CD8-positive, alpha-beta T cell (primary cell): ENCODE measurements at regions of chr3 and their contacts with region 1.

Region 1: DNA sequence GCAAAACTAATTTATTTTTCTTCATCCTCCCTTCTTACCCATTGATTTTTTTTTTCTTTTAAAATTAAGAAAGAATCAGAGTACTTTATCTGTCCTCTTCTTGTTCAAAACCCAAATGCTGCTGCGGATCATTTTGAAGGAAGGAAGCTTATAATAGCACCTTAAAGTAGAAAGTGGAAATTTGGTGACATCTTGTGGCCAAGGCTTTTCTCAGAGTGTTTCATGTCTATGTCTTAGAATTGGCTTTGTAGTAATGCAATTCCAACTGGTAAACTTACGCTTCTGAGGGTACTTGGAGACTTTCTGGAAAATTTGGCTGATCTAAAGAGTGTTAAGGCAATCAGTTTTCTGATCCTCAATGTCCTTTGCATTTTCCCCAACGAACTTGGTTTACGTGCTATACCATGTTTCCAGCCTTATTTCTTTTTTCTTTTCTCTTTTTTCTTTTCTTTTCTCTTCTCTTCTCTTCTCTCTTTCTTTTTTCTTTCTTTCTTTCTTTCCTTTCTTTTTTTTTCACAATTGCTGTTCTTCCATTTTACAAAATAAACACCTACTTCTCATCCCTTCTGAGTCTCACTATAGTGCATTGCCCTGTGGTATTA is 30.7 kb downstream of the C3orf38 start:
- DNase-seq: peak in 5 of 9 experiments; percentile 13 to 67 (median 27)
- ATAC-seq: peak; percentile 62
- H3K4me3 ChIP-seq: no peak overlapping the region
- H3K4me3 Mint-ChIP-seq: no peak overlapping the region
- H3K27ac ChIP-seq: no peak overlapping the region
- H3K27ac Mint-ChIP-seq: no peak overlapping the region
- H3K4me1 ChIP-seq: no peaks in the 10 kb centered on the region
- H3K4me1 Mint-ChIP-seq: peaks cover 6% of the 10 kb centered on the region
- H3K27me3 ChIP-seq: no peaks in the 10 kb centered on the region
- H3K27me3 Mint-ChIP-seq: peaks cover 2% of the 10 kb centered on the region
- CTCF ChIP-seq: peak; percentile 75

Region 2: DNA sequence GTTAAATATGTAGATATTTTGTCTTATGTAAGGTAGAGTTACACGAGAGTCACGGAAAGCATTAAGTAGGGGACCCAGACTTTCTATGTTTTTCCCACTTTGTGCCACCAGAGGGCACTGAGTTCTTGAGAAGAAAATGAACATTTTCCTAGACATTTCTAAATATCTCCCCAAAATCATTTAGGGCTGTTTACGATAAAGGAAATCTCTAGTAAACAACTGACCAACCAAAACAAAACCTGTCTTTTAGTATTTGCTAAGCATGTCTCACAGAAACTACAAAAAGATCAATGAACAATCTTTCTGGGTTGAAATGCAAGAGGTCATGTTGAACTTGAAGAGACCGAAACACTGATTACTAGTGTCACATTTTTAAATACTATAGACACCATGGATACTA is 920.2 kb before region 1 on chr3:
- CTCF ChIA-PET with region 1: no interaction called
- POLR2A ChIA-PET with region 1: no interaction called
- intact Hi-C with region 1: loop called in 1 of 2 experiments (anchors 1 kb)
- DNase-seq: peak in 6 of 9 experiments; percentile 14 to 59 (median 43)
- ATAC-seq: peak; percentile 66
- H3K4me3 ChIP-seq: no peak overlapping the region
- H3K4me3 Mint-ChIP-seq: no peak overlapping the region
- H3K27ac ChIP-seq: no peak overlapping the region
- H3K27ac Mint-ChIP-seq: no peak overlapping the region
- H3K4me1 ChIP-seq: no peaks in the 10 kb centered on the region
- H3K4me1 Mint-ChIP-seq: peaks cover 2% of the 10 kb centered on the region
- H3K27me3 ChIP-seq: no peaks in the 10 kb centered on the region
- H3K27me3 Mint-ChIP-seq: no peaks in the 10 kb centered on the region
- CTCF ChIP-seq: peak; percentile 61

Region 3: DNA sequence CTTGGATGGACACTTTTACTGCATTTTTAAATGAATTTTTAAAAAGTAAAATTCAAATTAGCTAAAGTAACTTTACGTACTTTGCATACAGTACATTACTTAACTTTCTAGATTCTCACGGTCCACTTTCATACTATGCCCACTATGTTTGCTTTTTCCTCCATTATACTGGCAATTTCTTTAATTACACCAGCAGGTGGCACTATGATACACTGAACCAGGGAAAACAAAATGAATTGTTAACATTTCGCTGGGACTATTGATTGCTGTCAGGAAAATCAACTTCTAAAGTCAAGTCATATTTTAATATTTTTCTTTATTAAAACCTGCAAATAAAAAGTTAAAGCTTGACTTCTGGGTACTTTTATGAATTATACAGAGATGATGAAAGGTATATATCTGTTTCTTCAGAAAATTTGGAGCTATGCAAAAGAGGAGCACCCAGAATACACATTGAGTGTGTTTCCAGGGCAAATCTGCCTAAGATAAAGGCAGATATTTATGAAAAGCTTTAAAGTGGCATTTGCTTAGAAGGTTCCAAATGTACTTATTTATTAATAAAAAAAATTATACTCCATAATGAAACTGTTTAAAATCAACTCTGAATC is 882.3 kb before region 1 on chr3:
- CTCF ChIA-PET with region 1: interaction called, 5 read pairs
- POLR2A ChIA-PET with region 1: no interaction called
- intact Hi-C with region 1: loop called (anchors 1 to 2 kb)
- DNase-seq: peak in 2 of 9 experiments; percentile 33 to 50
- ATAC-seq: peak; percentile 62
- H3K4me3 ChIP-seq: no peak overlapping the region
- H3K4me3 Mint-ChIP-seq: no peak overlapping the region
- H3K27ac ChIP-seq: no peak overlapping the region
- H3K27ac Mint-ChIP-seq: no peak overlapping the region
- H3K4me1 ChIP-seq: no peaks in the 10 kb centered on the region
- H3K4me1 Mint-ChIP-seq: peaks cover 2% of the 10 kb centered on the region
- H3K27me3 ChIP-seq: no peaks in the 10 kb centered on the region
- H3K27me3 Mint-ChIP-seq: peaks cover 2% of the 10 kb centered on the region
- CTCF ChIP-seq: peak; percentile 89

Region 4: DNA sequence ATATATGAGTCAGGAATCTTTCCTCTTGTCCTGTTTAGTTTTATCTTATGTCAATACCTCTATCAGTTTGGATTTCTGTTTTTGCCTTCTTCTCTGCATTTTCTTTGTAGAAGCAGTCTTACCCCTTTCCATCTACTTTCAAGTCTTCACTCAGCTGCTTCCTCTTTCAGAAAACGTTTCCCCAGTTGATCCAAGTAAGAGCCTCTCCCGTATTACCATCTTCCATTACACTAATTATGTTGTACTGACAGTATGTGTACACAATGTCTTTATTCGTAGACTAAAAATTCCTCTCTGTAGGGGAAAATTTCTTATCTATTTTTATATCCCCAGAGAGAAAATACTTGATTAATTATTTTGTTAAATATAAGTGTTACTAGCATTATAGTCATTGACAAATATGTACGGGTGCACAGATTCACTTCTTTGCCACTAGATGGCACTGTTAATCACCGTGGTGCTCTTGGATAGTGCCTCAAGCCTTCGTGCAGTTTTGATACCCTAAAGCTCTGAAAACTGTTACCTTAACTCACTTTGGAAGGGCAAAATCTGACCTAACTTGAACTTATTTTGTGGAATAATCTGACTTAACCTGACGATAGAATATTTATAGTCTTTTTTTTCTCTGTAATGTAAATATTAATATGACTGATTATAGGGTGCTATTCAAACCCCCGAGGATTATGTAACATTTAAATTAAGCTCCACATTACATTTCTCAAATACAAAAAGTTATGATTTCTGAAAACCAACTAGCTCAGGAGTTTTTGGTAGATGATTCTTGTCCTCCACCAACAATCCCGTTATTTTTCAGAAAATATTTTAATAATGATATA is 829.9 kb before region 1 on chr3:
- CTCF ChIA-PET with region 1: interaction called, 10 read pairs
- POLR2A ChIA-PET with region 1: no interaction called
- intact Hi-C with region 1: loop called (anchors 1 kb)
- DNase-seq: peak in 6 of 9 experiments; percentile 6 to 66 (median 18)
- ATAC-seq: peak; percentile 82
- H3K4me3 ChIP-seq: no peak overlapping the region
- H3K4me3 Mint-ChIP-seq: no peak overlapping the region
- H3K27ac ChIP-seq: no peak overlapping the region
- H3K27ac Mint-ChIP-seq: no peak overlapping the region
- H3K4me1 ChIP-seq: no peaks in the 10 kb centered on the region
- H3K4me1 Mint-ChIP-seq: no peaks in the 10 kb centered on the region
- H3K27me3 ChIP-seq: no peaks in the 10 kb centered on the region
- H3K27me3 Mint-ChIP-seq: peaks cover 3% of the 10 kb centered on the region
- CTCF ChIP-seq: peak; percentile 93

Region 5: DNA sequence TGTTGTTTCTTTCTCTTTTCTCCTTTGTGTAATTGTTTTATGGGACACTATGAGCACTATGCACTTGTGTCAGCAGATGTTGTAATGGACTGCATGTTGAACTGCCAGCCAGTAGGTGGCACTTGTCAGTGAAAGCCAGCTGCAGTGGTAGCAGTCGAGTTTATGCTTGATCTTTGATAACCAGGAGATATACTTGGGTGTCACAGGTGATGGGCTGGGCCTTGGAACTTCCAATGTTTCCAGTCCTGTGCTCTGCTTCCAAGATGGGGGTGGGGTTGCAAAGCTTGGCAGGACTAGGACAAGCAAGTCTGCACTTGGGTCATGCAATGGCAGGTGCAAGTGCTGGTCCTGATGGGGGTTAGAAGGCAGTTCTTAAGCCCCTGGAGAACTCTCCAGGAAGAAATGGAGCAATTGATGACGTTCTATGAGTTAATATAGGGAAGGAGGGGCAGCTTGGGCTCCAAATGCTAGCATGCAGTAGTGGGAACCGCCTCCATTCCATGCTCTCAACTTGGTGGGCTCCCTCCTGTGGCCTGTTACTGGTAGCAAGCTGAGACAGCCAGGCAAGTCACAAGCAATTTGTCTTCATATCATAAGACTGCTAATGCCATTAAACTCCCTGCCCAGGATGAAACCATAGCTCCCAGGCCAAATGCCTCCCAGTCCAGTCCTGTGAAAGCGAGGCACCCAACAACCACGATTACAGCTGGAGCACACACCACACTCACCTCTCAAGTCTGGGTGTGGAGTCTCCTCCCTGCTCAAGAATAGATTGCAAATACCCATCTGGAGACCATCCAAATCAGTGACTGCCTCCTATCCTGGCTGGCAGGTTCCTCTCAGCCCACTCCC is 408.9 kb before region 1 on chr3:
- CTCF ChIA-PET with region 1: interaction called, 3 read pairs
- POLR2A ChIA-PET with region 1: no interaction called
- intact Hi-C with region 1: loop called (anchors 1 to 2 kb)
- DNase-seq: peak in 7 of 9 experiments; percentile 4 to 65 (median 29)
- ATAC-seq: peak; percentile 77
- H3K4me3 ChIP-seq: no peak overlapping the region
- H3K4me3 Mint-ChIP-seq: no peak overlapping the region
- H3K27ac ChIP-seq: no peak overlapping the region
- H3K27ac Mint-ChIP-seq: no peak overlapping the region
- H3K4me1 ChIP-seq: no peaks in the 10 kb centered on the region
- H3K4me1 Mint-ChIP-seq: no peaks in the 10 kb centered on the region
- H3K27me3 ChIP-seq: no peaks in the 10 kb centered on the region
- H3K27me3 Mint-ChIP-seq: peaks cover 3% of the 10 kb centered on the region
- CTCF ChIP-seq: peak; percentile 53

Region 6: DNA sequence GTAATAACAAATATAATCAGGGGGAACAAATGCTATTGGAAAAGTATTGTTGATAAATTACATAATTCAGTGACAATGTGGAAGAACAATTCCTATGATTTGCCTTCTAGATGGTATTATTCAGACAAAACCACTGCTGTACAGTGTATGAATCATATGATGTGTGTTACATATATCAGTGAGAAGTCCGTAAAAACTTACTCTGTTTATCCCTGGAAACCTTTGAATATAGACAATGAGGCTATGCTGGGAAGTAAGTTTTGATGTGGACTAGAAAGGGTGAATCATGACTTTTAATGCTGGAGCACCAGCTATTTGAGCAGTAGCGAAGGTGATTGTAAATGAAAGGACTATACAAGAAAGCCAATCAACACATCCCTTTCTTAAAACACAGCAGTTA is 12.8 kb before region 1 on chr3:
- CTCF ChIA-PET with region 1: interaction called, 12 read pairs
- POLR2A ChIA-PET with region 1: no interaction called
- intact Hi-C with region 1: no loop called
- DNase-seq: no peak
- ATAC-seq: no peak
- H3K4me3 ChIP-seq: no peak overlapping the region
- H3K4me3 Mint-ChIP-seq: no peak overlapping the region
- H3K27ac ChIP-seq: no peak overlapping the region
- H3K27ac Mint-ChIP-seq: no peak overlapping the region
- H3K4me1 ChIP-seq: no peaks in the 10 kb centered on the region
- H3K4me1 Mint-ChIP-seq: peaks cover 9% of the 10 kb centered on the region
- H3K27me3 ChIP-seq: no peaks in the 10 kb centered on the region
- H3K27me3 Mint-ChIP-seq: no peaks in the 10 kb centered on the region
- CTCF ChIP-seq: no peak